BJ (cell line): ENCODE measurements at regions of chr3 and their contacts with region 1.

Region 1: DNA sequence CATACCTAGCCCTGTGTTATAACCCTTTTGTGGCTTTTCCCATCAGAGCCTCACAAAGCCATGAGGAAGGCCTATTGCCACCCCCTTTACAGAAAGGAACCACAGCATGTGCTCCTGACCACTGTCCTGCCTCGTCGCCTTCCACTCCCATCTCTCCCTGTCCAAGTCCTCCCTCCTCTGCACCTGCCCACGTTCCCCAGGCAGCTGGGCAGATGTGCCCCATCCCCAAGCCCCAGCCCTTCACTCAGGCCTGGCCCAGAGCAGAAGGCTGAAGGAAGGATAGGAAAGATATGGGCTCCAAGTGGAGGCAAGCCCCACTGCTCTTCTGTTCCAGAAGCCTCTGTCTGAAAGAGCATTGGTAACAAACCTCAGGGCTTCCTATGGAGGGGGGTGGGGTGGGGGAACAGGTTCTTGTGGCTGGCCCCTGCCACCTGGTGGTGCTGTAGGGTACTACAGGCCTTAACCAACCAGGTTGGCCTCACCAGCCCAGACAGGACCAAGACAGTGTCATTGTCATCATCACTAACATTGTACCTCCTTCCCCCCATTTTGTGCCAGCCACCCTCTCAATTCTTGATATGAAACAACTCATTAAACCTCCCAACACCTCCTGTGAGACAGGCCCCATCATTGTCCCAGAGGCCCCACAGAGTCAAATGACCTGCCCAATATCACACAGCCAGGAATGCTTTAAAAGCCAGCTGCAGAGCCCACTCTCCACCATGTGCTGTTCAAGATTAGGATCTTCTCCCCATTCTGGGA is 10.0 kb downstream of the POC1A start:
- DNase-seq: no peak
- H3K4me3 ChIP-seq: no peak overlapping the region
- H3K27me3 ChIP-seq: no peaks in the 10 kb centered on the region
- CTCF ChIP-seq: peak; percentile 95

Region 2: DNA sequence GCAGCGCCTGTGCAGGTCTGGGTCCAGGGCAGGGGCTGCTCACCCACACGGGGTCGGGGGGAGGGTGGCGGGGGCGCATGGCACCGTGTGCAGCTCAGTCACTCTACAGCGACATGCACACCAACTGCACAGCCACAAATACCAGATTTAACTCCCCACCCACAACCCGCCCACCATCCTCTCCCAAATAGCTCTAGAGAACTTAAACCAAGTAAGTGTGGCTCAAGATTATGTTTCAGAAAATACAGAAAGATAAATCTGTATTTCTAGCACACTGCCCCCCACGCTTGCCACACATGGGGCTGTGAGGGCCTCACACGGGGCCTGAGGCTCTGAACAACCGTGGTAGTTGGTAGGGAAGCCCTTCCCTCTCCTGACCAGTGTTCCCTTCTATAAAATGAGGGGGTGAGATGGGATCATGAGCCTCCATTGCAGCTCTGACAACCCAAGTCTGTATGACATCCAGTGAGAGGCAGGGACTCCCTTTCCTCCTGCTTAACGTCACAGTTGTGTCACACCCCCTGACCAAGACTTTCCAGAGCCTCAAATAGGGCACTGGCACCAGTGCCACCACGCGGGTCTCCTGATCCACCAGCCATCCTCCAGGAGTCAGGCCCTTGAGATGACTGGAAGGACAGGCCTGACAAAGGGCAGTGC is 13.1 kb before region 1 on chr3:
- CTCF ChIA-PET with region 1: interaction called, 13 read pairs
- POLR2A ChIA-PET with region 1: no interaction called
- DNase-seq: no peak
- H3K4me3 ChIP-seq: no peak overlapping the region
- H3K27me3 ChIP-seq: no peaks in the 10 kb centered on the region
- CTCF ChIP-seq: no peak